OCI-LY7 (cell line): ENCODE measurements at regions of chr5 and their contacts with region 1.

Region 1: GRCh38 chr5:96752341-96753016 is 55.3 kb downstream of the ERAP1 start:
- DNase-seq: peak; percentile 82
- H3K4me3 ChIP-seq: no peak overlapping the region
- H3K27ac ChIP-seq: no peak overlapping the region
- H3K4me1 ChIP-seq: no peaks in the 10 kb centered on the region
- CTCF ChIP-seq: peak; percentile 91

Region 2: GRCh38 chr5:97142521-97143254 is 390.2 kb after region 1 on chr5 and contains the start of gene LIX1:
- CTCF ChIA-PET with region 1: no interaction called
- POLR2A ChIA-PET with region 1: interaction called, 7 read pairs
- intact Hi-C with region 1: loop called (anchors 5 kb)
- DNase-seq: peak; percentile 75
- H3K4me3 ChIP-seq: no peak within 1 kb of the TSS
- H3K27ac ChIP-seq: no peak within 1 kb of the TSS
- H3K4me1 ChIP-seq: peaks cover 5% of the 10 kb centered on the region
- CTCF ChIP-seq: peak; percentile 87
- total RNA-seq, gene LIX1: 0.18 and 0.44 TPM in 2 replicates

Region 3: DNA sequence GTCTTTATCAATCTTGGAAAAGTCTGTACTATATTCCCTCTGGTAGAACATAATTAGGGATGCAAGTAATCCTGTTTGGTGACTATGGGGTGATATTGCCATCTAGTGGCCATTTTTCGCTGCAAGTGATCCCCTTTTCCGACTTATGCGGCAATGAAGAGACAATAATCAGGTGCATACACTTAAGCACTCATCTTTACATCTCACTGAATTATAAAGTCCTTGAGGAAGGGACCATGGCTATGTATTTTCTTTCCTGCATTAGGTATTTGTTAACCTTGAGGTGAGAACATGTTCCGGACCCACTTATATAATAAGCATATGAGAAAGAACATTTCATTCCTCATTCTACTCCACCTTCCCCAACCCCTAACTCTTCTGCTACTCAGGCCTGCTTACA is 409.6 kb after region 1 on chr5:
- CTCF ChIA-PET with region 1: no interaction called
- POLR2A ChIA-PET with region 1: interaction called, 4 read pairs
- intact Hi-C with region 1: loop called (anchors 1 kb)
- DNase-seq: peak; percentile 74
- H3K4me3 ChIP-seq: no peak overlapping the region
- H3K27ac ChIP-seq: no peak overlapping the region
- H3K4me1 ChIP-seq: peaks cover under 1% of the 10 kb centered on the region
- CTCF ChIP-seq: peak; percentile 100